Activated T-helper 2 cell treated with anti-CD3 and anti-CD28 coated beads, Interferon-gamma antibody, Interleukin-2, Interleukin-4, amounts not matched to agents 10 μg/mL and 5 μg/mL and 100 μg/mL, durations not matched to agents 14 hours and 24 hours and 36 hours (primary cell): ENCODE measurements at regions of chr1 and their contacts with region 1.

Region 1: GRCh38 chr1:233627376-233627775 is 13.5 kb downstream of the KCNK1 start:
- DNase-seq: no peak
- H3K4me3 Mint-ChIP-seq: no peak overlapping the region
- H3K27ac Mint-ChIP-seq: no peak overlapping the region
- H3K4me1 Mint-ChIP-seq: peaks cover 7% of the 10 kb centered on the region
- H3K27me3 Mint-ChIP-seq: peaks cover 4% of the 10 kb centered on the region

Region 2: GRCh38 chr1:233668725-233669294 is 41.4 kb after region 1 on chr1:
- intact Hi-C with region 1: loop called (anchors 5 kb)
- DNase-seq: no peak
- H3K4me3 Mint-ChIP-seq: no peak overlapping the region
- H3K27ac Mint-ChIP-seq: no peak overlapping the region
- H3K4me1 Mint-ChIP-seq: peaks cover 7% of the 10 kb centered on the region
- H3K27me3 Mint-ChIP-seq: peaks cover 3% of the 10 kb centered on the region

Region 3: GRCh38 chr1:233695901-233696300 is 68.5 kb after region 1 on chr1:
- intact Hi-C with region 1: no loop called
- DNase-seq: no peak
- H3K4me3 Mint-ChIP-seq: no peak overlapping the region
- H3K27ac Mint-ChIP-seq: no peak overlapping the region
- H3K4me1 Mint-ChIP-seq: no peaks in the 10 kb centered on the region
- H3K27me3 Mint-ChIP-seq: peaks cover 9% of the 10 kb centered on the region